Endothelial cell of umbilical vein (primary cell): ENCODE measurements at regions of chr1 and their contacts with region 1.

Region 1: GRCh38 chr1:904310-904950 is 19.3 kb upstream of the SAMD11 start:
- DNase-seq: peak; percentile 68
- H3K4me3 ChIP-seq: peak overlapping the region in 1 of 3 experiments; percentile 30
- H3K27ac ChIP-seq: no peak overlapping the region
- H3K4me1 ChIP-seq: no peaks in the 10 kb centered on the region
- H3K27me3 ChIP-seq: no peaks in the 10 kb centered on the region
- CTCF ChIP-seq: peak; percentile 78 to 87
- POLR2A ChIP-seq: no peak

Region 2: GRCh38 chr1:921011-921837 is 16.8 kb after region 1 on chr1:
- CTCF ChIA-PET with region 1: interaction called, 9 read pairs
- POLR2A ChIA-PET with region 1: no interaction called
- dilution Hi-C with region 1: no loop called
- intact Hi-C with region 1: loop called (anchors 2 kb)
- DNase-seq: peak; percentile 56
- H3K4me3 ChIP-seq: no peak overlapping the region
- H3K27ac ChIP-seq: no peak overlapping the region
- H3K4me1 ChIP-seq: no peaks in the 10 kb centered on the region
- H3K27me3 ChIP-seq: peaks cover 15 to 22% of the 10 kb centered on the region in 2 experiments
- CTCF ChIP-seq: peak; percentile 20 to 58
- POLR2A ChIP-seq: no peak

Region 3: DNA sequence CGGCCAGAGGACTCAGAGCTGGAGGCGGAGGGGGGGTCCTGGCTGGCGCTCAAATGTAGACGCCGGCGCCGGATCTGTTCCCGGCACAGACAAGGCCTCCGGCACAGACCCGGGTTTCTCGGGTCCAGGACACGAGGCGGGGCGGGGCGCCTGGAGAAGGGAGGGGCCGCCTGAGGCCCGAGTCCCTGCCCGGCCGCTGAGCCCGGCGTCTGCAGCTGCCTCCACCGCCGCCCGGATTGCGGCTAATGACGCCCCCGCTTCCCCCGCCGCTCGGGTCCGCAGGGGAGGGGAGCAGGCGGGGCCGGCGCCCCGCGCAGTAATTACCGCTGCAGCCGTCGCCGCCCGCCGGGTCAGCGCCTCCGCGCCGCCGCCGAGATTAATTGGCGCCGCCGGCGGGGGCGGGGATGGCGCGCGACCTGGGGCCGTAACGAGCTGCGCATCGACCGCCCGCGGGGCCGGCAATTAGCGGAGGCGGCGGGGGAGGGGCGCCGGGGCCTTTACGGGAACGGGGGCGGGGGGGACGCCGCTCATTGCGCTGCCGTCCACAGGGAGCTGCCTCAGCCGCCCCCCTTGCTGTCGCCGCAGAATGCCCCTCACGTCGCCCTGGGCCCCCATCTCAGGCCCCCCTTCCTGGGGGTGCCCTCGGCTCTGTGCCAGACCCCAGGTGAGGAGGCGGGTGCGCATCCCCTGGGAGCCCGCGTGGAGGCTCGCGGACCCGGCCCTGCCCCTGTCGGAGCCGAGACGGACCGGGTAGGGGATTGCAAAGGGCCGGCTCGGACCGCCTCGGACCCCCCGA is 37.4 kb after region 1 on chr1:
- CTCF ChIA-PET with region 1: interaction called, 14 read pairs
- POLR2A ChIA-PET with region 1: no interaction called
- dilution Hi-C with region 1: no loop called
- intact Hi-C with region 1: loop called (anchors 1 kb)
- DNase-seq: peak; percentile 16
- H3K4me3 ChIP-seq: no peak overlapping the region
- H3K27ac ChIP-seq: no peak overlapping the region
- H3K4me1 ChIP-seq: peaks cover 12% of the 10 kb centered on the region
- H3K27me3 ChIP-seq: peaks cover 7 to 29% of the 10 kb centered on the region in 2 experiments
- CTCF ChIP-seq: no peak
- POLR2A ChIP-seq: no peak

Region 4: GRCh38 chr1:951364-951763 is 46.9 kb after region 1 on chr1:
- CTCF ChIA-PET with region 1: interaction called, 6 read pairs
- POLR2A ChIA-PET with region 1: no interaction called
- dilution Hi-C with region 1: no loop called
- intact Hi-C with region 1: loop called (anchors 1 kb)
- DNase-seq: no peak
- H3K4me3 ChIP-seq: no peak overlapping the region
- H3K27ac ChIP-seq: no peak overlapping the region
- H3K4me1 ChIP-seq: no peaks in the 10 kb centered on the region
- H3K27me3 ChIP-seq: no peaks in the 10 kb centered on the region
- CTCF ChIP-seq: peak; percentile 20 to 52
- POLR2A ChIP-seq: no peak

Region 5: GRCh38 chr1:975896-976683 is 71.7 kb after region 1 on chr1:
- CTCF ChIA-PET with region 1: interaction called, 4 read pairs
- POLR2A ChIA-PET with region 1: no interaction called
- dilution Hi-C with region 1: no loop called
- intact Hi-C with region 1: loop called (anchors 1 kb)
- DNase-seq: no peak
- H3K4me3 ChIP-seq: no peak overlapping the region
- H3K27ac ChIP-seq: no peak overlapping the region
- H3K4me1 ChIP-seq: no peaks in the 10 kb centered on the region
- H3K27me3 ChIP-seq: no peaks in the 10 kb centered on the region
- CTCF ChIP-seq: peak; percentile 17 to 54
- POLR2A ChIP-seq: no peak

Region 6: GRCh38 chr1:1059494-1060280 is 155.3 kb after region 1 on chr1:
- CTCF ChIA-PET with region 1: no interaction called
- POLR2A ChIA-PET with region 1: no interaction called
- dilution Hi-C with region 1: no loop called
- intact Hi-C with region 1: no loop called
- DNase-seq: peak; percentile 70
- H3K4me3 ChIP-seq: peak overlapping the region; percentile 35 to 51 (median 43)
- H3K27ac ChIP-seq: no peak overlapping the region
- H3K4me1 ChIP-seq: peaks cover 16% of the 10 kb centered on the region
- H3K27me3 ChIP-seq: peaks cover 0 to 10% of the 10 kb centered on the region in 2 experiments
- CTCF ChIP-seq: no peak
- POLR2A ChIP-seq: no peak

Region 7: GRCh38 chr1:1150100-1150499 is 245.7 kb after region 1 on chr1:
- CTCF ChIA-PET with region 1: no interaction called
- POLR2A ChIA-PET with region 1: no interaction called
- dilution Hi-C with region 1: no loop called
- intact Hi-C with region 1: no loop called
- DNase-seq: no peak
- H3K4me3 ChIP-seq: no peak overlapping the region
- H3K27ac ChIP-seq: no peak overlapping the region
- H3K4me1 ChIP-seq: no peaks in the 10 kb centered on the region
- H3K27me3 ChIP-seq: no peaks in the 10 kb centered on the region
- CTCF ChIP-seq: no peak
- POLR2A ChIP-seq: no peak